PC-3 (cell line): ENCODE measurements at regions of chr6 and their contacts with region 1.

Region 1: GRCh38 chr6:7312616-7313504 is at the start of gene SSR1:
- DNase-seq: peak; percentile 97
- ATAC-seq: peak; percentile 95
- H3K4me3 ChIP-seq: peak within 1 kb of the TSS; percentile 91
- H3K27ac ChIP-seq: peak within 1 kb of the TSS; percentile 53
- H3K4me1 ChIP-seq: peaks cover 18% of the 10 kb centered on the region
- H3K27me3 ChIP-seq: no peaks in the 10 kb centered on the region
- CTCF ChIP-seq: no peak
- total RNA-seq, gene SSR1: 65.2 and 67.2 TPM in 2 replicates

Region 2: DNA sequence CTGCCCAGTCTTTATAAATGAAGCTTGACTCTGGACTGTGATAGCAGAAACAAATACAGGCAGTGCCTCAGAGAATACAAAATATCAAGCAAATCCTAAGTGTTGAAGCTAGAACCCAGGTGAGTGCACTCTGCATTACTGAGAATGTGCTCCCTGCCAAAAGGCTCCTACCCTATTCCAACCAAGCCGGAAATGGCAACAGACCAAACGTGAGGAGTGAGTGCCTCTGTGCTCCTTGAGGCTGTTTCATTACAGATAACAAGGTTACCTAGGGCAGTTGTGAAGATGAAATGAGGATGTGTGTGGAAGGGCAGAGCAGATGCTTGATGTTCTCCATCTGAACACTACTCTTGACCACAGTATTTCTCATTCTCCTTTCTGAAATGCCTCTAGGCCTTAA is 29.2 kb before region 1 on chr6:
- CTCF ChIA-PET with region 1: no interaction called
- POLR2A ChIA-PET with region 1: no interaction called
- intact Hi-C with region 1: no loop called
- DNase-seq: no peak
- ATAC-seq: no peak
- H3K4me3 ChIP-seq: no peak overlapping the region
- H3K27ac ChIP-seq: no peak overlapping the region
- H3K4me1 ChIP-seq: no peaks in the 10 kb centered on the region
- H3K27me3 ChIP-seq: no peaks in the 10 kb centered on the region
- CTCF ChIP-seq: no peak

Region 3: GRCh38 chr6:7389451-7390225 is 76.8 kb after region 1 on chr6 and contains the starts of genes CAGE1 and RIOK1:
- CTCF ChIA-PET with region 1: no interaction called
- POLR2A ChIA-PET with region 1: no interaction called
- intact Hi-C with region 1: loop called (anchors 1 kb)
- DNase-seq: peak; percentile 91
- ATAC-seq: peak; percentile 96
- H3K4me3 ChIP-seq: peak within 1 kb of the TSS; percentile 82
- H3K27ac ChIP-seq: peak within 1 kb of the TSS; percentile 88
- H3K4me1 ChIP-seq: peaks cover 20% of the 10 kb centered on the region
- H3K27me3 ChIP-seq: no peaks in the 10 kb centered on the region
- CTCF ChIP-seq: no peak
- total RNA-seq, gene CAGE1: 0.29 TPM in 1 of 2 replicates, not detected in the other
- total RNA-seq, gene RIOK1: 29.8 and 39.9 TPM in 2 replicates

Region 4: GRCh38 chr6:7410851-7411250 is 98.0 kb after region 1 on chr6:
- CTCF ChIA-PET with region 1: no interaction called
- POLR2A ChIA-PET with region 1: interaction called, 13 read pairs
- intact Hi-C with region 1: no loop called
- DNase-seq: no peak
- ATAC-seq: no peak
- H3K4me3 ChIP-seq: no peak overlapping the region
- H3K27ac ChIP-seq: no peak overlapping the region
- H3K4me1 ChIP-seq: no peaks in the 10 kb centered on the region
- H3K27me3 ChIP-seq: no peaks in the 10 kb centered on the region
- CTCF ChIP-seq: no peak

Region 5: DNA sequence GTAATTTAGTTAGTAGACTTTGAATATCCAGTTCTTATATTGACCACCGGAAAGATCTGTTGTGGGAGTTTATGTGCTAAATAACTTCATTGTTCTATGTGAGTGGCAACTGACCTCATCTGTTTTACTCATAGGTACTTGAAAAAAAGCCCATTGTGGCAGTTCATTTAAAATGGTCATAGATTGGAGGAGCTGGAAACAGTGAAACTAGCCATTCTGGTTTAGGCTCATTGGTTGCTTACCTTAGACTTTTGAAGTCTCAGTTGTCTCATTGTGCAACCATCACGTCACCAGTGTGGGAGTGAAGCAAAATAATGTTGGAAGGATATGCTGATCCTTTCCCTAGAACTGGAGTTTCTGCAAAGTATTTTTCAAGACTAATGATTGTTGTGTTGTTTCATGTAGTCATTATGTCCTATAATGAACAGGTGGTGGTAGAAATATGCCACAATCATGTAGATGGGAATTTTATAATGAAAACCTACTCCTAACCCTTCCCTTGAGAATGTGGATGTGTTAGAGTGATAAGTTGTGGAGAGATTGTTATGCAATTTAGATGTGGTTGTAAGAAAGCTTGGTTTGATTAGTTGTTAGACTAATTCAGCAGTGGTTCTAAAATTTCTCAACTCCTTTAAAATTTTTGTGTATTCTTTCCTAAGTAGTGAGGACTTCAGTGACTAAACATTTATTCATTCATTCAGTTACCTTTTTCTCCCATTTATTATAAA is 247.0 kb after region 1 on chr6:
- CTCF ChIA-PET with region 1: no interaction called
- POLR2A ChIA-PET with region 1: interaction called, 10 read pairs
- intact Hi-C with region 1: no loop called
- DNase-seq: peak; percentile 74
- ATAC-seq: no peak; the same call in 1 of the 2 replicates
- H3K4me3 ChIP-seq: no peak overlapping the region
- H3K27ac ChIP-seq: peak overlapping the region; percentile 80
- H3K4me1 ChIP-seq: peaks cover 27% of the 10 kb centered on the region
- H3K27me3 ChIP-seq: no peaks in the 10 kb centered on the region
- CTCF ChIP-seq: no peak